ENCODE measurements at regions of chr5 and their contacts with region 1.

Region 1: GRCh38 chr5:142012792-142013388 is at the start of gene GNPDA1:
- DNase-seq: peak; percentile 24 to 87 (median 57)
- ATAC-seq: peak; percentile 60
- H3K4me3 ChIP-seq: peak within 1 kb of the TSS; percentile 86
- H3K4me3 Mint-ChIP-seq: peak within 1 kb of the TSS; percentile 90
- H3K27ac ChIP-seq: peak within 1 kb of the TSS; percentile 60 to 73
- H3K27ac Mint-ChIP-seq: peak within 1 kb of the TSS; percentile 89
- H3K4me1 ChIP-seq: peaks cover 67% of the 10 kb centered on the region
- H3K4me1 Mint-ChIP-seq: peaks cover 84% of the 10 kb centered on the region
- H3K27me3 ChIP-seq: no peaks in the 10 kb centered on the region
- H3K27me3 Mint-ChIP-seq: no peaks in the 10 kb centered on the region
- CTCF ChIP-seq: no peak
- total RNA-seq, gene GNPDA1: 5.8 to 6.6 TPM

Region 2: DNA sequence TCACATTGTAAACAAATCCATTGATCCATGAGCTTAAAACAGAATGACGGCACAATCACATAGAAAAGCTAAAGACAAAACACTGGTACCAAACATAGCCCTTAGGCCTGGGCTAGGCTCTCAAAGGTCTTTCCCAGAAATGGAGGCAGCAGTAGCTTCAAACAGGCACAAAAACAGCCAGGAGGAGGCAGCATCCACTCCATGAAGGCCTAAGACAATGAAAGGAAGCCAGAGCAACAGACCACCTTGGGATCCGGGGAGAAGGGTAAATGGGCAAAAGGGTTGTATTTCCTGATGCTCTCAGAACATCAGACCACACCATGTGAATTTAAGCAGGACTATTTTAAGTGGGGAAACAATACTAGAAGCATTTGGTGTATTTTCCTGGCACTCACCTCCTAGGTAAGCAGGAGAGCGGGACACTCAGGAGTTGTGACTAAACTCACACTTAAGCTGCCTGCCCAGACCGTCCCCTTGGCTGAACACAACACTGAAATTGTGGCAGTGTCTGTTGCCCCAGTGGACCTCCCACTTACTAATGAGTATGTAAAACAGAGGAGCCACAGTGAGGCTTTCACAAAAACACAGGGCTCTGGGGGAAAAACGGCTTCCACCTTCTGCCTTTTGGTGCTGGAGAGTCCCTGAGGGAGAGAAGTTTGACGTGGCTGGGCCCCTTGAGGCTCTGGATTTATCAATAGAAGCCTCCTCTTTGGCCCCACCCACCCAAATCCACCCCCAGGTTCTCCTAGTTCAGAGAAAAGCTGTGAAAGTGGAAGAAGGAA is 12.0 kb before region 1 on chr5:
- CTCF ChIA-PET with region 1: interaction called, 15 read pairs
- POLR2A ChIA-PET with region 1: interaction called, 5 read pairs
- intact Hi-C with region 1: no loop called
- DNase-seq: peak in 4 of 14 experiments; percentile 32 to 42 (median 36)
- ATAC-seq: no peak
- H3K4me3 ChIP-seq: no peak overlapping the region
- H3K4me3 Mint-ChIP-seq: no peak overlapping the region
- H3K27ac ChIP-seq: no peak overlapping the region
- H3K27ac Mint-ChIP-seq: peak overlapping the region; percentile 47
- H3K4me1 ChIP-seq: peaks cover 15% of the 10 kb centered on the region
- H3K4me1 Mint-ChIP-seq: peaks cover 30% of the 10 kb centered on the region
- H3K27me3 ChIP-seq: no peaks in the 10 kb centered on the region
- H3K27me3 Mint-ChIP-seq: no peaks in the 10 kb centered on the region
- CTCF ChIP-seq: peak; percentile 37

Region 3: GRCh38 chr5:142095651-142096330 is 82.9 kb after region 1 on chr5:
- CTCF ChIA-PET with region 1: interaction called, 14 read pairs
- POLR2A ChIA-PET with region 1: interaction called, 14 read pairs
- intact Hi-C with region 1: no loop called
- DNase-seq: peak; percentile 67 to 96 (median 76)
- ATAC-seq: peak; percentile 85
- H3K4me3 ChIP-seq: no peak overlapping the region
- H3K4me3 Mint-ChIP-seq: peak overlapping the region; percentile 28
- H3K27ac ChIP-seq: peak overlapping the region; percentile 71 to 75
- H3K27ac Mint-ChIP-seq: peak overlapping the region; percentile 94
- H3K4me1 ChIP-seq: peaks cover 61% of the 10 kb centered on the region
- H3K4me1 Mint-ChIP-seq: peaks cover 70% of the 10 kb centered on the region
- H3K27me3 ChIP-seq: no peaks in the 10 kb centered on the region
- H3K27me3 Mint-ChIP-seq: no peaks in the 10 kb centered on the region
- CTCF ChIP-seq: no peak

Region 4: DNA sequence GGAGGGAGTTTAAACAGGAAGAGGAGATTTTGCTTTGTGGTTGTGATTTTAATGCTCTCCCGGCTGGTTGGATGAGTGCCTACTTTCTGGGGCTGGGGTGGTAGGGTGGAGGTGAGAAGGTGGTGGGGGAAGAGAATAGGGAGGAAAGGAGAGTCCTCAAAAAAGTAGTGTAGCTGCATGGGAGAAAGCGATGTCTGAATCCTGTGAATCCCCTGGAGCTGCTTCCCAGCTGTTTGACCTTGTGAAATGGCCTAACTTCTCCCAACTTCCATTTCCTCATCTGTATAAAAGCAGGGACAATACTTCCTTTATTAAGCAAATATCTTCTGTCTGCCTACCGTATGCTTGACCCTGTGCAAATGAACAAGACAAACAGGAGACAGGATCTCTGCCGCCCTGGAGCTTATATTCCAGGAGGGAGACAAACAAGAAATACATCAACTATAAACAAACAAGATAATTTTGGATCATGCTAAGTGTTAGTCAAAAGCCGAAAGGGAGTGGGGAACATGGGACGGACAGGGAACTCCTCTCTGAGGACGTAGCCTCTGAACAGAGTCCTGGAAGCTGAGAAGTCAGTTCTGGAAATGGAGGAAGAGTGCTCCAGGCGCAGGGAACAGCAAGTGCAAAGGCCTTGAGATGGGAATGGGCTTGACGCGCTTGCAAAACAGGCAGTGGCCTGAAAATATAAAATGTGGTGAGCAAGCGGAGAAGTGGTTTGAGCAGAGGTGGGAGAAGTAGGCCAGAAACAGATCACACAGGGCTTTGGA is 208.4 kb after region 1 on chr5:
- CTCF ChIA-PET with region 1: no interaction called
- POLR2A ChIA-PET with region 1: no interaction called
- intact Hi-C with region 1: loop called (anchors 10 kb)
- DNase-seq: no peak
- ATAC-seq: no peak
- H3K4me3 ChIP-seq: no peak overlapping the region
- H3K4me3 Mint-ChIP-seq: no peak overlapping the region
- H3K27ac ChIP-seq: no peak overlapping the region
- H3K27ac Mint-ChIP-seq: no peak overlapping the region
- H3K4me1 ChIP-seq: peaks cover 29% of the 10 kb centered on the region
- H3K4me1 Mint-ChIP-seq: peaks cover 42% of the 10 kb centered on the region
- H3K27me3 ChIP-seq: no peaks in the 10 kb centered on the region
- H3K27me3 Mint-ChIP-seq: no peaks in the 10 kb centered on the region
- CTCF ChIP-seq: no peak

Measured in CD4-positive, alpha-beta T cell (primary cell).